Sigmoid colon (tissue), 7 donors: ENCODE measurements at regions of chr5 and their contacts with region 1.

Region 1: GRCh38 chr5:180291943-180292831 is at the start of gene MAPK9:
- DNase-seq: peak; percentile 88
- H3K4me3 ChIP-seq: peak within 1 kb of the TSS; percentile 85 to 99 (median 93)
- H3K27ac ChIP-seq: peak within 1 kb of the TSS; percentile 86 to 97 (median 96)
- H3K4me1 ChIP-seq: peaks cover 0 to 39% (median 20%) of the 10 kb centered on the region in 4 donors
- H3K27me3 ChIP-seq: no peaks in the 10 kb centered on the region
- CTCF ChIP-seq: no peak
- EP300 ChIP-seq: no peak
- POLR2A ChIP-seq: no peak
- total RNA-seq, gene MAPK9: 39.5 to 45.7 (median 41.4) TPM

Region 2: DNA sequence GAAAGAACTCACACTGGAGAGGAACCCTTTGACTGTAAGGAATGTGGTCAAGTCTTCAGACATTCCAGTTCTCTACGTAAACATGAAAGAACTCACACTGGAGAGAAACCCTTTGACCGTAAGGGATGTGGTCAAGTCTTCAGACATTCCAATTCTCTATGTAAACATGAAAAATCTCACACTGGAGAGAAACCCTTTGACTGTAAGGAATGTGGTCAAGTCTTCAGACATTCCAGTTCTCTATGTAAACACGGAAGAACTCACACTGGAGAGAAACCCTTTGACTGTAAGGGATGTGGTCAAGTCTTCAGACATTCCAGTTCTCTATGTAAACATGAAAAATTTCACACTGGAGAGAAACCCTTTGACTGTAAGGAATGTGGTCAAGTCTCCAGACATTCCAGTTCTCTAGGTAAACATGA is 32.9 kb before region 1 on chr5:
- intact Hi-C with region 1: no loop called
- DNase-seq: no peak
- H3K4me3 ChIP-seq: no peak overlapping the region
- H3K27ac ChIP-seq: no peak overlapping the region
- H3K4me1 ChIP-seq: no peaks in the 10 kb centered on the region
- H3K27me3 ChIP-seq: no peaks in the 10 kb centered on the region
- CTCF ChIP-seq: no peak
- EP300 ChIP-seq: no peak
- POLR2A ChIP-seq: no peak

Region 3: DNA sequence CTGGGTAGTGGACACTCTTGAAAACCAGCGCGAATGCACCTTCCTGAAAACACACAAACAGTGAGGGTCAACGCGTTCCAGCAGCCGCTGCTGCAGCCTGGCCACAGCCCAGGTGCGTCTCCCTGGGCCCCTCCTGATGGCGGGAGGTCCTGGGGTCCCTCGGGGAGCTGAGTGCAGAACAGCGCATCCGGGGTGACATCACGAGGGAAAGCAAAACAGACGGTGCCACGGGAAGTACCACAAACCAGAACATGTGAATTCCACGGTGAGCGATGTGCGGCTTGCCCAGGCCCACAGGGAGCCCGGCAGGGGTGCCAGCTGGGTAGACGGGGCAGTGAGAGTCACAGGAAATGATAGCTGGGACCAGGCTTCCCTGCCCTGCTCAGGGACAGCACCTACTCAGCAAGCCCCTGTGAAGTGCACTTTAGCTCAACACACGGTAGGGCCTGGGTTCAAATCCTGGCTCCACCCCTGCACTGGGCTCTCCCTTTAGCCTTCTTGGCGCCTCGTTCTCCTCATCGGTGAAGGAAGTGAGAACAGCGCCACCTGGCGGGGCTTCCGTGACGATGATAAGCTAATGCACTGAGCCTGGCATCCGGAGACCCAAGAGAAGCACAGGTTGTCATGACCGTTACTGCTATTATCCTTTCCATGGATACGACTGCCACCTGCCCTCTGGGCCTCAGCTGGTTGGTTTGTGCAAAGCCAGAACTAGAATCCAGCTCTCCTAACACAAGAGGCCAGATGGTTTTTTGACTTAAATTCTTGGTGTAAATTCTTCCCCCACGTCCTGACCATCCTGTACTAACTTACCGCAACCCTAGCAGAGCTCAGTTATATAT is 36.3 kb after region 1 on chr5:
- intact Hi-C with region 1: loop called (anchors 1 kb)
- DNase-seq: peak; percentile 91
- H3K4me3 ChIP-seq: no peak overlapping the region
- H3K27ac ChIP-seq: no peak overlapping the region
- H3K4me1 ChIP-seq: peaks cover 0 to 17% (median 11%) of the 10 kb centered on the region in 4 donors
- H3K27me3 ChIP-seq: no peaks in the 10 kb centered on the region
- CTCF ChIP-seq: peak; percentile 31 to 62 (median 54)
- EP300 ChIP-seq: no peak
- POLR2A ChIP-seq: no peak

Region 4: GRCh38 chr5:180353048-180353979 is 61.1 kb after region 1 on chr5 and contains the start of gene GFPT2:
- intact Hi-C with region 1: loop called (anchors 1 kb)
- DNase-seq: peak; percentile 93
- H3K4me3 ChIP-seq: peak within 1 kb of the TSS; percentile 49 to 85 (median 65)
- H3K27ac ChIP-seq: peak within 1 kb of the TSS; percentile 75 to 80 (median 77)
- H3K4me1 ChIP-seq: peaks cover 0 to 31% (median 23%) of the 10 kb centered on the region in 4 donors
- H3K27me3 ChIP-seq: peaks cover 0 to 21% (median 5%) of the 10 kb centered on the region in 3 donors
- CTCF ChIP-seq: no peak
- EP300 ChIP-seq: no peak
- POLR2A ChIP-seq: no peak
- total RNA-seq, gene GFPT2: 16.1 to 42.7 (median 21.7) TPM

Region 5: GRCh38 chr5:180470966-180471582 is 178.9 kb after region 1 on chr5:
- intact Hi-C with region 1: loop called (anchors 1 kb)
- DNase-seq: peak; percentile 80
- H3K4me3 ChIP-seq: no peak overlapping the region
- H3K27ac ChIP-seq: no peak overlapping the region
- H3K4me1 ChIP-seq: no peaks in the 10 kb centered on the region
- H3K27me3 ChIP-seq: peaks cover 0 to 11% (median 0%) of the 10 kb centered on the region in 3 donors
- CTCF ChIP-seq: peak; percentile 51 to 92 (median 80)
- EP300 ChIP-seq: no peak
- POLR2A ChIP-seq: no peak

Region 6: DNA sequence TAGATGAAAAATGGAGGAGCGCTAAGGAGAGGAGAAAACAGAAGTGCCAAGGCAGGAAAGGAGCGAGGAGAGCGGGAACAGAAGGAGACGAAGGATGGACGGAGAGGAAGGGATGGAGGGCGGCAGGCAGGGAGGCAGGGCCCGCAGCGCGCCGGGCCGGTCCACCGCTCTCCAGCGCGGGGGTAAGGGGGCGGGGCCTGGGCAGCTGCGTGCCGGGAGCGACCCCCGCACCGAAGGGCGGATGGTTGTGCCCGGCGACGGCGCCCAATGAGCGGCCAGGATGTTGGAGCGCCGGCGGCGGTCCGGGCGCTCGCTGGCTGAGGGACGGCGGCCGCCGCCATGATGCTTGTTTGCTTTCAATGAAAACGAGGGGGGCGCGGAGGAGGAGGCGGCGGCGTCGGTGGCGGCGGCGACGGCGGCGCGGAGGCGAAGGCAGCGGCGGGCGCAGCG is 201.9 kb after region 1 on chr5 and contains the start of gene CNOT6:
- intact Hi-C with region 1: loop called (anchors 5 kb)
- DNase-seq: peak; percentile 95
- H3K4me3 ChIP-seq: peak within 1 kb of the TSS; percentile 82 to 94 (median 88)
- H3K27ac ChIP-seq: peak within 1 kb of the TSS; percentile 90 to 95 (median 94)
- H3K4me1 ChIP-seq: peaks cover 0 to 33% (median 24%) of the 10 kb centered on the region in 4 donors
- H3K27me3 ChIP-seq: no peaks in the 10 kb centered on the region
- CTCF ChIP-seq: no peak
- EP300 ChIP-seq: no peak
- POLR2A ChIP-seq: no peak
- total RNA-seq, gene CNOT6: 16.0 to 21.8 (median 17.8) TPM